ENCODE measurements at regions of chr5 and their contacts with region 1.

Region 1: GRCh38 chr5:132243366-132243977 is 14.0 kb upstream of the PDLIM4 start:
- DNase-seq: no peak
- H3K4me3 Mint-ChIP-seq: no peak overlapping the region
- H3K27ac Mint-ChIP-seq: no peak overlapping the region
- H3K4me1 Mint-ChIP-seq: no peaks in the 10 kb centered on the region
- H3K27me3 Mint-ChIP-seq: peaks cover 22% of the 10 kb centered on the region

Region 2: DNA sequence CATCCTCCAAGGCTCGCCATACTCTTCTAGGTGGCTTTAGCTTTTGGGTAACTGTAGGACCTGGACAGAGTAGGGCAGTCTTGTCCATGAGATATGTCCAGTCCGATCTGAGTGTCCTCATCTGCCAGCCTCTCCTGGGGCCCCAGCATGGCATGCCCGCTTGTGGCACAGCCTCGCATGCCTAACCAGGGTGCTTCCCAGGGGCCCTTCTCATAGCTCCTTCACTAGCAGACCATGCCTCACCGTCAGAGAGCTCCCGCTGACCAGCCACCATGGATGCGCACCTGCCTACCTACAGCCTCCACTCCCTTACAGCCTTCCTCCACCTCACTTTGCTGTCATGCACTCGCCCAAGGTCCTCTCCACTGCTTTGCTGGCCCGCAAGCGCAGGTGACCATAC is 386.1 kb before region 1 on chr5:
- intact Hi-C with region 1: no loop called
- DNase-seq: no peak
- H3K4me3 Mint-ChIP-seq: no peak overlapping the region
- H3K27ac Mint-ChIP-seq: no peak overlapping the region
- H3K4me1 Mint-ChIP-seq: peaks cover 19% of the 10 kb centered on the region
- H3K27me3 Mint-ChIP-seq: peaks cover 9% of the 10 kb centered on the region

Region 3: DNA sequence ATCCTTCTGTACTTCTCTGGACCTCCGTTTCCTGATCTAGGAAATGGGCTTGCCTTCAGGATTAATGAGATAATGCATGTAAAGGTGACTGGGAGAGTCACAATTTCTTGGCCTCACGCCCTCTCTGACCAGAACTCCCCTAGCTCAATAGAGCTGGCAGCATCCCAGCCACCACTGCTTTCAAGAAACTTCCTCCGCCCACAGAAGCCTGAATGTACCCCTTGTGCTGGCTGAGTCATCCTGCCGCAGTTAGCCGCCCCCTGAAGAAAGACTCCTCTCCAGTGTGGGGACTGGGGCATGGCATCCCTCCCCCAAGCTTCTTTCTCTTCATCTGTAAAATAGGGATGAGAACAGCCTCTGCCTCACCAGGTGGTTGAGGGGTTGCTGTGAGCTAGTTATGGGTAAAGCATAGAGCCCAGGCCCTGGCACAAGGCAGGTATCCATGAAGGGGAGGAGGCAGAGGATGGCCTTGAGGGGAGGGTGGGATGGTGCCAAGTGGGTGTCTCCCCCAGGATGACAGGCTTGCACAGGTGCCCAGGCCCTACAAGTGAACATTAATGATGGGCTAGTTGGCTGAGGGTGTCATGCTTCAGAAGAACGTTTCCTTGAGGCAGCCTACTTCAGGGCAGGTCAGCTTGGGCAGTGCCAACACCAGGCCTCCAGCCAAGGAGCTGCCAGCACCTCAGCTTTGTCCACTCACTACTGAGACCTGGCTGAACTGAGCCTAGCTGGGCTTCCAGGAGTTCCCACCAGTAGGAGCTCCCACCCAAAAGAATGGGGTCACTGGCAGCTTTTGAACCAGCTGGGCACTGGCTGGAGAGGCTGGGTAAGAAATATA is 17.5 kb after region 1 on chr5:
- intact Hi-C with region 1: loop called (anchors 2 kb)
- DNase-seq: no peak
- H3K4me3 Mint-ChIP-seq: peak overlapping the region; percentile 31
- H3K27ac Mint-ChIP-seq: peak overlapping the region; percentile 64
- H3K4me1 Mint-ChIP-seq: peaks cover 50% of the 10 kb centered on the region
- H3K27me3 Mint-ChIP-seq: peaks cover 10% of the 10 kb centered on the region

Region 4: DNA sequence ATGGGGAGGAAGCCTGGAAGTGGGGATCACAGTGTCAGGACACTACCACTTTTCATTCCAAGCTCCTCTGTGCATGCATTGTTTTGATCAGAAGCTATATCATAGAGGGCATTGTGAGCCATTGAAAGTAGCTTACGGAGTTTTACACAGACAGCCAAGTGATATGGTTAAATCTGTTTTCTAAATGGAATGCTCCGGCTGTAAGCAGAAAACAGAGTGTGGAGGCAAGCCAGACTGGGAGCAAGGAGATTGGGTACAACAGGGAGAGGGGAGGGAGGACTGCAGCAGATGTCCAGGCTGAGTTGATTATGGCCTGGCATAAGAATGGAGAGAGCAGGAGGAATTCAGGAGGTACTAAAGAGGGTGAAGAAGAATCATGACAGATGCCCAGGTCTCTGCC is 554.2 kb after region 1 on chr5:
- intact Hi-C with region 1: no loop called
- DNase-seq: no peak
- H3K4me3 Mint-ChIP-seq: no peak overlapping the region
- H3K27ac Mint-ChIP-seq: no peak overlapping the region
- H3K4me1 Mint-ChIP-seq: peaks cover 5% of the 10 kb centered on the region
- H3K27me3 Mint-ChIP-seq: peaks cover 40% of the 10 kb centered on the region